CD4-positive, alpha-beta memory T cell (primary cell): ENCODE measurements at regions of chr2 and their contacts with region 1.

Region 1: DNA sequence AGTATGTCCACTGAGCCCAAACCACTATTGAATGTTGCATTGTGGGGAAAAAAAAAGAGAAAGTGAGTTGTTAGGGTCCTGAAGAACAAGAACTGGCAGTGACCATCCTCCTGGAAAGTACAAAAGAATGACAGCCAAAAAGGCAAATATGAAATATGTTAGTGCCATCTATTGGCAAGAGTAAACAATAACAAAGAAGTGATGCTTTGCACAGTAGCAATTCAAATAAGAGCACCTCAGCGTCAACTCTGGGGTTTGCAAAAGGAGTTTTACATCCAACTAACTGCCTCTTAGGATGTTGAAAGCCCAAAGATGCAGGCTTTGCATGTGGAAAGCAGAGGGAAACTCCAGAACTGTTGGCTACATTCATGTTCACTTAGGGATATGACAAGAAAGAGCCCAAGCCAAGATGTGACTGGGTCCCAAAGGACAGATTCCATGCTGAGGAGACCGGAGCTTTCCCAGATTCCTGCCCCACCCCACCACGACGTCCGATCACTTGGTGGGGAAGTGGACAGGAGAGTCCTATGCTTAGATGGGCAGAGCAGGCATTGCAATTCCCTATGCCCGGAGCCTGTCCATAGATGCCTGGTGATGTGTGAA is 15.6 kb downstream of the TRABD2A start:
- DNase-seq: peak in 4 of 5 donors; percentile 52 to 64 (median 55)
- H3K4me3 ChIP-seq: no peak overlapping the region
- H3K4me3 Mint-ChIP-seq: peak overlapping the region; percentile 30 to 82 (median 63)
- H3K27ac ChIP-seq: no peak overlapping the region
- H3K27ac Mint-ChIP-seq: peak overlapping the region; percentile 72 to 95 (median 91)
- H3K4me1 ChIP-seq: peaks cover 80% of the 10 kb centered on the region
- H3K4me1 Mint-ChIP-seq: peaks cover 61 to 92% (median 74%) of the 10 kb centered on the region in 4 donors
- H3K27me3 ChIP-seq: no peaks in the 10 kb centered on the region
- H3K27me3 Mint-ChIP-seq: no peaks in the 10 kb centered on the region

Region 2: DNA sequence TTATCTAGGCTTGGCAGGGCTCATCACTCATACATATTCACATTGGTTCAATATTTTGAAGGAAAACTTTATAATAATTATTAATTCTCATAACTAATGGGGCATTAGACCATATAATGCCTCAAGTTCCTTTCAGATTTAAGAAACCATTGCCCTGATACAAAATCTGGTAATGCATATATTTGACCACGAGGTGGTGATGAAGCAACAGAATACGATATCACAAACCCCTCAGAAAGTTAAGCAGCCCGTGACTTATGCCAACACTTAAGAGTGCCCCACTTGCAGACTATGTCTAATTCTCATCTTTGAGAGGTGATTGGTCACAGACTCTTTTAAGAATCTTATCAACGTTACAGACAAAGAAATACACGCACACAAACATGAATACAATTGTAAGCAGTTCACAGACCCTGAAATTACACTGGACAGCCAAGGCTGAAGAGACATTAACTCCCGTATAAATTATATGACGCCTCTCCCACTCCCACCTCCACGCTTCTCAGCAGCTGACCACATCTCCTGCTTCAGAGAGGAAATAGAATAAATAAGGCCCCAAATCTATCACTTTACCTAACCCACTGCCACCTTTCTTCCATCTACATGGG is 369.6 kb before region 1 on chr2:
- CTCF ChIA-PET with region 1: interaction called, 15 read pairs
- POLR2A ChIA-PET with region 1: interaction called, 5 read pairs
- intact Hi-C with region 1: loop called (anchors 1 kb)
- DNase-seq: peak; percentile 63 to 75 (median 71)
- H3K4me3 ChIP-seq: no peak overlapping the region
- H3K4me3 Mint-ChIP-seq: no peak overlapping the region
- H3K27ac ChIP-seq: no peak overlapping the region
- H3K27ac Mint-ChIP-seq: peak overlapping the region in 6 of 7 donors; percentile 39 to 84 (median 60)
- H3K4me1 ChIP-seq: peaks cover 8% of the 10 kb centered on the region
- H3K4me1 Mint-ChIP-seq: peaks cover 6 to 14% (median 7%) of the 10 kb centered on the region in 4 donors
- H3K27me3 ChIP-seq: no peaks in the 10 kb centered on the region
- H3K27me3 Mint-ChIP-seq: no peaks in the 10 kb centered on the region

Region 3: DNA sequence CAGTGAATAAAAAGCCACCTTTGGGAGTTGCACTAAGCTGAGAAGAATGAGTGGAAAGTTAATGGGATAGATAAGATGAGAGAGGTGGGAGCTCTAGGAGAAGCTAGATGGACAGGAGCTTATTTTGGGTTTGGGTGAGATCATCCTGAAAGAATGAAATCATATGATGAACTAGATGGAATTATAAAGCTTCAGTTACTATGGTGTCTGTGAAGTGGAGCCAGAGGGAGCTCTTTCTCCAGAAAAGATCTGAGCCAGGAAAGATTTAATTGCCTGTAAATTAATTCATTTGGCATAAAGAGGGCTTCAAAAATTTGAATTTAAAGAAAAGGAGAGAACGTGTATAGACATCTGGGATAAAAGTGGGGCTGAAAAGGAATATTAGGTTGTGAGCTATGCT is 338.7 kb before region 1 on chr2:
- CTCF ChIA-PET with region 1: interaction called, 16 read pairs
- POLR2A ChIA-PET with region 1: interaction called, 5 read pairs
- intact Hi-C with region 1: loop called (anchors 1 kb)
- DNase-seq: peak in 1 of 5 donors; percentile 12
- H3K4me3 ChIP-seq: no peak overlapping the region
- H3K4me3 Mint-ChIP-seq: peak overlapping the region in 1 of 8 donors; percentile 2
- H3K27ac ChIP-seq: no peak overlapping the region
- H3K27ac Mint-ChIP-seq: peak overlapping the region in 3 of 7 donors; percentile 12 to 55 (median 22)
- H3K4me1 ChIP-seq: peaks cover 10% of the 10 kb centered on the region
- H3K4me1 Mint-ChIP-seq: peaks cover 2 to 24% (median 13%) of the 10 kb centered on the region in 4 donors
- H3K27me3 ChIP-seq: no peaks in the 10 kb centered on the region
- H3K27me3 Mint-ChIP-seq: no peaks in the 10 kb centered on the region

Region 4: DNA sequence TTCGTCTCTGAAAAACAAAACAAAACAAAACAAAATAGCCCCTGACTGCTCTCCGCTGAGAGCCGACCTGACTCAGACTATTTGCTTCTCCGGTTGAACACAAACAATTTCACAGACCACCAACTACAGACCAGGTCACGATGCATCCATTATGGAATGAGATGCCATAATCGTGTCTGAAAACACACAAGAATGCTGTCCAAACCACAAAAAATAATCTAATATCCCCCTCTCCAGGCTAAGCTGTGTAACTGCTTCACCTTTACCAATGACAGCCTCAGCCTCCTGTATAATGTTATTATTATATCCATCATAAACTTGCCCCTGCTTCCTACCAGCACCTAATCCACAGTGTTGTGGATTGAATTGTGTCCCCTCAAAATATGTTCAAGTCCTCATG is 234.2 kb before region 1 on chr2:
- CTCF ChIA-PET with region 1: interaction called, 4 read pairs
- POLR2A ChIA-PET with region 1: no interaction called
- intact Hi-C with region 1: loop called (anchors 1 kb)
- DNase-seq: peak in 4 of 5 donors; percentile 46 to 57 (median 56)
- H3K4me3 ChIP-seq: no peak overlapping the region
- H3K4me3 Mint-ChIP-seq: peak overlapping the region in 1 of 8 donors; percentile 36
- H3K27ac ChIP-seq: no peak overlapping the region
- H3K27ac Mint-ChIP-seq: peak overlapping the region in 3 of 7 donors; percentile 30 to 65 (median 59)
- H3K4me1 ChIP-seq: peaks cover 24% of the 10 kb centered on the region
- H3K4me1 Mint-ChIP-seq: peaks cover 26 to 31% (median 28%) of the 10 kb centered on the region in 4 donors
- H3K27me3 ChIP-seq: no peaks in the 10 kb centered on the region
- H3K27me3 Mint-ChIP-seq: no peaks in the 10 kb centered on the region

Region 5: DNA sequence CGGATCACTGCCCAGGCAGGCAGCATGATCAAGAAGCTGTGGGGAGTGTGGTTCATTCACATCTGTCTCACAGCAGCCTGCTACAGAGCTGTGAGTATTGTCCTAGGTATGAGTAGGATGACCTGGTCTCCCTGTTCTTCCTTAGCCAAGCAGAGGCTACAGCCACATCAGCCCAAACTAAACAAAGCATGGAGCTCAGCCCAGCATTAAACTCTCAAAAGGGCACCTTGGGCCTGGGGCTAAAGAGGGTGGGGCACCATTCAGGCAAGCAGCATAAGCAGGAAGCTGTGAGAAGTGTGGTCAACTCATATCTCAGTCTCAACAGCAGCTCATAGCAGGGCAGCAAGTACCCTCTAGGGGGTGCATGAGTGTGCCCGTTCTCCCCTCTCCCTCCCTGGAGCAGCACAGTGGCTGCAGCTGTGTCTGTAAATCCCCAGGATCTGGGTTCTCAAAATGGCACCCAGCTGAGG is 124.0 kb before region 1 on chr2:
- CTCF ChIA-PET with region 1: interaction called, 70 read pairs
- POLR2A ChIA-PET with region 1: interaction called, 12 read pairs
- intact Hi-C with region 1: loop called (anchors 1 kb)
- DNase-seq: peak; percentile 47 to 58 (median 51)
- H3K4me3 ChIP-seq: no peak overlapping the region
- H3K4me3 Mint-ChIP-seq: peak overlapping the region in 4 of 8 donors; percentile 12 to 39 (median 28)
- H3K27ac ChIP-seq: no peak overlapping the region
- H3K27ac Mint-ChIP-seq: peak overlapping the region in 6 of 7 donors; percentile 17 to 87 (median 64)
- H3K4me1 ChIP-seq: peaks cover 22% of the 10 kb centered on the region
- H3K4me1 Mint-ChIP-seq: peaks cover 15 to 28% (median 21%) of the 10 kb centered on the region in 4 donors
- H3K27me3 ChIP-seq: no peaks in the 10 kb centered on the region
- H3K27me3 Mint-ChIP-seq: no peaks in the 10 kb centered on the region

Region 6: GRCh38 chr2:84832772-84833461 is 32.4 kb before region 1 on chr2:
- CTCF ChIA-PET with region 1: interaction called, 9 read pairs
- POLR2A ChIA-PET with region 1: interaction called, 5 read pairs
- intact Hi-C with region 1: loop called (anchors 5 kb)
- DNase-seq: peak in 2 of 5 donors; percentile 15 to 38
- H3K4me3 ChIP-seq: peak overlapping the region in 1 of 2 donors; percentile 39
- H3K4me3 Mint-ChIP-seq: peak overlapping the region; percentile 52 to 84 (median 78)
- H3K27ac ChIP-seq: peak overlapping the region; percentile 59
- H3K27ac Mint-ChIP-seq: peak overlapping the region in 4 of 7 donors; percentile 93 to 96 (median 94)
- H3K4me1 ChIP-seq: peaks cover 87% of the 10 kb centered on the region
- H3K4me1 Mint-ChIP-seq: peaks cover 27 to 49% (median 39%) of the 10 kb centered on the region in 4 donors
- H3K27me3 ChIP-seq: no peaks in the 10 kb centered on the region
- H3K27me3 Mint-ChIP-seq: no peaks in the 10 kb centered on the region

Region 7: GRCh38 chr2:84846041-84846663 is 19.1 kb before region 1 on chr2:
- CTCF ChIA-PET with region 1: interaction called, 28 read pairs
- POLR2A ChIA-PET with region 1: interaction called, 132 read pairs
- intact Hi-C with region 1: no loop called
- DNase-seq: peak; percentile 67 to 84 (median 78)
- H3K4me3 ChIP-seq: peak overlapping the region; percentile 11 to 15
- H3K4me3 Mint-ChIP-seq: peak overlapping the region; percentile 31 to 84 (median 74)
- H3K27ac ChIP-seq: peak overlapping the region; percentile 61
- H3K27ac Mint-ChIP-seq: peak overlapping the region; percentile 92 to 99 (median 97)
- H3K4me1 ChIP-seq: peaks cover 99% of the 10 kb centered on the region
- H3K4me1 Mint-ChIP-seq: peaks cover 81 to 98% (median 90%) of the 10 kb centered on the region in 4 donors
- H3K27me3 ChIP-seq: no peaks in the 10 kb centered on the region
- H3K27me3 Mint-ChIP-seq: no peaks in the 10 kb centered on the region